CD14-positive monocyte (primary cell): ENCODE measurements at regions of chr18 and their contacts with region 1.

Region 1: GRCh38 chr18:74652392-74652988 is 54.8 kb downstream of the ZNF407 start:
- DNase-seq: peak in 1 of 3 donors; percentile 27
- H3K4me3 ChIP-seq: no peak overlapping the region
- H3K4me3 Mint-ChIP-seq: no peak overlapping the region
- H3K27ac ChIP-seq: no peak overlapping the region
- H3K27ac Mint-ChIP-seq: no peak overlapping the region
- H3K4me1 ChIP-seq: no peaks in the 10 kb centered on the region
- H3K4me1 Mint-ChIP-seq: peaks cover under 1% of the 10 kb centered on the region
- H3K27me3 ChIP-seq: no peaks in the 10 kb centered on the region
- H3K27me3 Mint-ChIP-seq: no peaks in the 10 kb centered on the region
- CTCF ChIP-seq: peak; percentile 69

Region 2: GRCh38 chr18:74342416-74343043 is 310.0 kb before region 1 on chr18:
- intact Hi-C with region 1: no loop called
- DNase-seq: peak; percentile 25 to 40 (median 40)
- H3K4me3 ChIP-seq: no peak overlapping the region
- H3K4me3 Mint-ChIP-seq: no peak overlapping the region
- H3K27ac ChIP-seq: no peak overlapping the region
- H3K27ac Mint-ChIP-seq: no peak overlapping the region
- H3K4me1 ChIP-seq: no peaks in the 10 kb centered on the region
- H3K4me1 Mint-ChIP-seq: no peaks in the 10 kb centered on the region
- H3K27me3 ChIP-seq: peaks cover 2 to 4% of the 10 kb centered on the region in 2 donors
- H3K27me3 Mint-ChIP-seq: peaks cover 0 to 4% (median 2%) of the 10 kb centered on the region in 3 donors
- CTCF ChIP-seq: peak; percentile 81

Region 3: DNA sequence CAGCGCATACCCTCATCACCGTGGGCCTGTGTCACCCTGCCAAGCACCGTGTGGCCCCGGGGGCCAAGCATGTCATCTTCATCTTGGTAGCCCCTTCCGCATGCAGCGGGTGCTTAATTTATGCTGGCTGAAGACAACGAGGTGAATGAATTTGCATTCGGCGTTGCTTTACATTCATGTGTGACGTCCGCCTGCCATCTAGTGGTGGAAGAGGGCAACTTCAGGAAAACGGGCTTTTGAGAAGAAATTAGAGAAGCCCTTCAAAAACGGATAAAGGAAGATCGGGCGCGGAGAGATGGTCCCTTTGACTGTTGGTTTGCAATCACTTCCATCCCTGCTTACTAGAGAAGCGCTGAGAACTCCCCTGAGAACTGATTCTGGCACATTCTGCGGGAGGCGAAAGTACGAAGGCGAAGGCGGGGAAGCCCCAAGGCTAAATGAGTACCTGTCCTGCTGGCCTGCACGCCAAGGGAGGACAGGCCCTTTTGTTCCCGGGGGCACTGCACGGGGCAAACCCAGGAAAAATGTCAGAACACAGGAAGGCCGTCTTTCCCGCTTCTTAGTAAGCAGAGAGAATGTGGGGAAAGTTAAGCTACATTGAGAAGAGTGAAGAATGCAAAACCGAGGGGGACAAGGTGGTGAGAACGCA is 1696.7 kb after region 1 on chr18:
- intact Hi-C with region 1: loop called in 1 of 2 experiments (anchors 10 kb)
- DNase-seq: peak; percentile 35 to 50 (median 39)
- H3K4me3 ChIP-seq: no peak overlapping the region
- H3K4me3 Mint-ChIP-seq: no peak overlapping the region
- H3K27ac ChIP-seq: no peak overlapping the region
- H3K27ac Mint-ChIP-seq: peak overlapping the region in 1 of 7 donors; percentile 31
- H3K4me1 ChIP-seq: no peaks in the 10 kb centered on the region
- H3K4me1 Mint-ChIP-seq: peaks cover 6% of the 10 kb centered on the region
- H3K27me3 ChIP-seq: no peaks in the 10 kb centered on the region
- H3K27me3 Mint-ChIP-seq: peaks cover 0 to 3% (median 2%) of the 10 kb centered on the region in 3 donors
- CTCF ChIP-seq: peak; percentile 86